ENCODE measurements at regions of chr1 and their contacts with region 1.

Region 1: DNA sequence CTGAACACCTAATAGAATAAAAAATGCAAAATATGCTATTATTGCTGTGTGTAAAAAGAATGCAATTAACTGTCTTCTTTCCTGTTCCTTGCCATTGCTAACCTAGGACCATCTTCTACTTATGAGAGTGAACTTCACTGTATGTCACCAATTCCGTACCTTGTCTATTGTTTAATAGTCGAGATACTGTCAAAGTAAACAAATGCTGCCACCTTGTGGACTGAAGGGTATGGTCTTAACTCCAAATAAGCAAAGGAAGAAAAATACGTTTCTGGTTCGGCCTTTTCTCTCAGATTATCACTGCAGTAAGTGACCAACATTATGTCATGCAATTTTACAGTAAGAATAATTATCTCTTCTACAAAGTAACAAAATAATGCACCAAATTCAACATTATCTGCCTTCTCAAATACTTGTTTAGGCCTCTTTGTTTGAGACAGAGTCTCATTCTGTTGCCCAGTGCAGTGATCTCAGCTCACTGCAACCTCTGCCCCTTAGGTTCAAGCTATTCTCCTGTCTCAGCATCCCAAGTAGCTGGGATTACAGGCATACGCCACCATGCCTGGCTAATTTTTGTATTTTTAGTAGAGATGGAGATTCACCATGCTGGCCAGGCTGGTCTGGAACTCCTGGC is 133.4 kb downstream of the COP1 start:
- DNase-seq: peak; percentile 7
- ATAC-seq: peak; percentile 91
- H3K4me3 ChIP-seq: no peak overlapping the region
- H3K27ac ChIP-seq: no peak overlapping the region
- H3K4me1 ChIP-seq: no peaks in the 10 kb centered on the region
- H3K27me3 ChIP-seq: no peaks in the 10 kb centered on the region
- CTCF ChIP-seq: peak; percentile 48 to 69 (median 61)
- EP300 ChIP-seq: no peak
- POLR2A ChIP-seq: no peak
- RAD21 ChIP-seq: peak; percentile 79

Region 2: GRCh38 chr1:175471039-175471800 is 602.4 kb before region 1 on chr1:
- CTCF ChIA-PET with region 1: no interaction called
- POLR2A ChIA-PET with region 1: no interaction called
- RAD21 ChIA-PET with region 1: no interaction called
- SMC1A ChIA-PET with region 1: no interaction called
- in situ Hi-C with region 1: loop called (anchors 10 kb)
- intact Hi-C with region 1: no loop called
- DNase-seq: no peak
- ATAC-seq: peak; percentile 58
- H3K4me3 ChIP-seq: no peak overlapping the region
- H3K27ac ChIP-seq: no peak overlapping the region
- H3K4me1 ChIP-seq: no peaks in the 10 kb centered on the region
- H3K27me3 ChIP-seq: peaks cover 0 to 3% of the 10 kb centered on the region in 2 experiments; a peak in 2 of 4 replicates
- CTCF ChIP-seq: no peak
- EP300 ChIP-seq: no peak
- POLR2A ChIP-seq: no peak
- RAD21 ChIP-seq: no peak

Measured in GM12878 (cell line).